ENCODE measurements at regions of chr17 and their contacts with region 1.

Region 1: GRCh38 chr17:46995841-46996571 is 17.0 kb upstream of the RPRML start:
- DNase-seq: no peak
- H3K4me3 Mint-ChIP-seq: no peak overlapping the region
- H3K27ac Mint-ChIP-seq: no peak overlapping the region
- H3K4me1 Mint-ChIP-seq: peaks cover 9% of the 10 kb centered on the region
- H3K27me3 Mint-ChIP-seq: no peaks in the 10 kb centered on the region
- CTCF ChIP-seq: no peak

Region 2: DNA sequence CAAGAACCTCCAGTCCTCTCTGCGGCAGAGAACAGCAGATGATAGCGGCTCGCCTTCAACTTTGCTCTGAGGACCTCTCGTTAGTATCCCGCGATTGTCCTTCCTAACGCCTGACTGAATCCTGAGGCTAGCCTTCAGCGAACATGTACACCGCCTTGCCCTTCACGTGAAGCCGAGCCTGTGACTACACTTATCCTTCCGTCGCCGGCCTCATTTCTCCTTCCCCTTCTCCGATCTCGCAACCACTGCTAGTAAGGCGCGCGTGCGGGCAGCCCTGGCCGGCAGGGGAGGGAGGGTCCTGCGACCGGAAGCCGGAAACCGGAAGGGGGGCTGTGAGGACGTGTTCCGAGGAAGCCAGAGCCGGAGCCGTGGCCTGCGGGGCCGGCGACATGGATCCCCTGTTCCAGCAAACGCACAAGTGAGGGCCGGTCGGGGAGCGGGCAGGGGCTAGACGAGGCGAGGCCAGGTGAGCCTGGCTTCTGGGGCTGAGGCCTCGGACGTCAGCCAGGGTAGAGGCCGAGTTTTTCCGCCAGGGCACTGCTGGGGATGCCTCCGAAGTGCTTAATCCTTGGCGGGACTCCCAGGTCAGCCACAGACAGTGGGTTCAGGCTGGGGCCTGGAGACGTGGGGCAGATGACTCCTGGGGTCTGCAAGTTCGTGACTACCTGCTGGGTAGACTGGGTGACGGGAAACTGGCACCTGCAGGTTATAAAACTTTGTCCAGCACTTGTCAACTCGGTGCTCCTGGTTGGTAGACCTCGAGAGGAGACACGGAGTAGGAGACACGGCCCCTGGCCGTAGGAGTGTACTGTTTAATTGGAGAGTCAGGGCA is 73.0 kb before region 1 on chr17 and contains the start of gene GOSR2:
- CTCF ChIA-PET with region 1: interaction called, 3 read pairs
- intact Hi-C with region 1: loop called (anchors 2 kb)
- DNase-seq: peak; percentile 97
- H3K4me3 Mint-ChIP-seq: peak within 1 kb of the TSS; percentile 87
- H3K27ac Mint-ChIP-seq: peak within 1 kb of the TSS; percentile 97
- H3K4me1 Mint-ChIP-seq: peaks cover 8% of the 10 kb centered on the region
- H3K27me3 Mint-ChIP-seq: peaks cover 15% of the 10 kb centered on the region
- CTCF ChIP-seq: no peak
- total RNA-seq, gene GOSR2: 90.7 and 91.2 TPM in 2 replicates

Region 3: GRCh38 chr17:46940621-46941404 is 55.2 kb before region 1 on chr17:
- CTCF ChIA-PET with region 1: interaction called, 45 read pairs
- intact Hi-C with region 1: loop called (anchors 1 kb)
- DNase-seq: peak; percentile 90
- H3K4me3 Mint-ChIP-seq: no peak overlapping the region
- H3K27ac Mint-ChIP-seq: peak overlapping the region; percentile 41
- H3K4me1 Mint-ChIP-seq: peaks cover 25% of the 10 kb centered on the region
- H3K27me3 Mint-ChIP-seq: no peaks in the 10 kb centered on the region
- CTCF ChIP-seq: peak; percentile 95

Region 4: DNA sequence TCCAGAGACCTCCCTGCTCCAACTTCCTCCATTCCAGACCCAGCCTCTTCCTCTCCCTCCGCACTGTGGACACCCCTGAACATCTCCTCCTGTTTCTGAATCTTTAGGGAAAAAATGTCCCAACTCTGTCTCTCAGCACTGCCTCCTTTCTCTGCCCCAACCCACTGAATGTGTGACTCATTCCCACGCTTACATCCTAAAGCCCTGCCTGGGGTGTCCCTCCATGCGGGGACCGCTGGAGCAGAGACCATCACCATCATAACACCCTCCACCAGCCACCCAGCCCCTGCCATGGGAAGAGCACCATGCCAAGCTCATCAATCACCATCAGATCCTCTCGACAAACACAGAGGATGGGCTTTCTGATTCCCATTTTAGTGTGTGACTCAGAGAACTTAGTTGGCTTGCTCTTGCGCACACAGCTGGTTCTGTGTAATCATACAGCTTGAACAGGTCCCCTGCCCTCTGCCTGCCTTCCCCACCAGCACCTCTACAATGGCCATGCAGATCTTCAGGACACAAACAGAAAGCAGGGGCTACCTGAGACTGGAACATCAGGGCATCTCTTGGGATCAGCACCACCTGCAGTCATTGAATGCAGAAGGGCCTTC is 27.7 kb before region 1 on chr17:
- CTCF ChIA-PET with region 1: no interaction called
- intact Hi-C with region 1: no loop called
- DNase-seq: no peak
- H3K4me3 Mint-ChIP-seq: no peak overlapping the region
- H3K27ac Mint-ChIP-seq: no peak overlapping the region
- H3K4me1 Mint-ChIP-seq: no peaks in the 10 kb centered on the region
- H3K27me3 Mint-ChIP-seq: peaks cover 24% of the 10 kb centered on the region
- CTCF ChIP-seq: no peak

Region 5: GRCh38 chr17:47077576-47077975 is 81.6 kb after region 1 on chr17:
- CTCF ChIA-PET with region 1: no interaction called
- intact Hi-C with region 1: no loop called
- DNase-seq: no peak
- H3K4me3 Mint-ChIP-seq: no peak overlapping the region
- H3K27ac Mint-ChIP-seq: no peak overlapping the region
- H3K4me1 Mint-ChIP-seq: no peaks in the 10 kb centered on the region
- H3K27me3 Mint-ChIP-seq: no peaks in the 10 kb centered on the region
- CTCF ChIP-seq: no peak

Region 6: GRCh38 chr17:47119746-47120520 is 123.9 kb after region 1 on chr17:
- CTCF ChIA-PET with region 1: no interaction called
- intact Hi-C with region 1: no loop called
- DNase-seq: no peak
- H3K4me3 Mint-ChIP-seq: no peak overlapping the region
- H3K27ac Mint-ChIP-seq: no peak overlapping the region
- H3K4me1 Mint-ChIP-seq: no peaks in the 10 kb centered on the region
- H3K27me3 Mint-ChIP-seq: no peaks in the 10 kb centered on the region
- CTCF ChIP-seq: no peak